ENCODE measurements at regions of chr11 and their contacts with region 1.

Region 1: GRCh38 chr11:75667831-75668450 is 897 bp downstream of the MAP6 start:
- DNase-seq: peak; percentile 36
- H3K4me3 Mint-ChIP-seq: peak overlapping the region; percentile 76
- H3K27ac Mint-ChIP-seq: no peak overlapping the region
- H3K4me1 Mint-ChIP-seq: peaks cover 18% of the 10 kb centered on the region
- H3K27me3 Mint-ChIP-seq: peaks cover 69% of the 10 kb centered on the region

Region 2: DNA sequence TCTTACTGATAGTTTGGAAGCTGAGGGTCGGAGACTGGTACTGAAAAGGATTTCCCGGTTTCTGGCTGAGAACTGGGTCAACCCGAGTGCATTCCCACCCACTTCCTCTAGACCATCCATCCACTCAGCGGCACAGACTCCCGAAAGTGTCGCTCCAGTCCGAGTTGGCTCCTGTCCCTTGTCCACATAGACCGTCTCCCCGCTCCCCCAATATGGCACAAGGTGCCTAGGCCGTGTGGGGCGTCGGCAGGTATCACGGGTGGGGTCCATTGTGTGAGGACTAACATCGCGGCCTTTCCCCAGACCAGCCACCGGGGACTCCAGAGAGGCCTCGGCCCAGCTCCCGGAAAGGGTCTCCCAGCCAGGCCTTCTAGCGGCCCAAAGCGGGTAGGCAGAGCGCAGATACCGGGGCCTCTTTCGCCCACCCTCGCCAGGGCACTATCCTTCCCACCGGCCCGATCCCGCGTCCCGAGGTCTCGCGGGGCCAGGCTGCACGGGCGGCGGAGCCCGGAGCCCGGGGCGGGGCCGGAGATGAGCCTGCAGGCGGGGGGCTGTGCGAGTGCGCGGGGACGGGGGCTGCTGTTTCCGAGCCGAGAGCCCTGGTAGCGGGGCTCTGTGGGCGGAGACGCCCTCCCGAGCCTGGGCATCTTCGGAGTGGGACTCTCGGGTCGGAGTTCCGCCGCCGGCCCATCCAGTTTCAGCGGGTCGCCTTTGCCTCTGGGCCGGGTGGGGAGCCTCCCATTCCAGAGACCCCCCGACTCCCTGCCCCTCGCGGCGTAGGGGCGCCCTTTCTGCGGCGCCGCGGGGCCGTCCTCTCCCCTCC is 84.8 kb before region 1 on chr11:
- CTCF ChIA-PET with region 1: no interaction called
- POLR2A ChIA-PET with region 1: no interaction called
- intact Hi-C with region 1: no loop called
- DNase-seq: peak; percentile 78
- H3K4me3 Mint-ChIP-seq: peak overlapping the region; percentile 78
- H3K27ac Mint-ChIP-seq: peak overlapping the region; percentile 76
- H3K4me1 Mint-ChIP-seq: peaks cover 16% of the 10 kb centered on the region
- H3K27me3 Mint-ChIP-seq: no peaks in the 10 kb centered on the region

Region 3: GRCh38 chr11:75654314-75654713 is 13.6 kb before region 1 on chr11:
- CTCF ChIA-PET with region 1: no interaction called
- POLR2A ChIA-PET with region 1: interaction called, 3 read pairs
- intact Hi-C with region 1: loop called (anchors 2 kb)
- DNase-seq: peak; percentile 43
- H3K4me3 Mint-ChIP-seq: no peak overlapping the region
- H3K27ac Mint-ChIP-seq: no peak overlapping the region
- H3K4me1 Mint-ChIP-seq: peaks cover 11% of the 10 kb centered on the region
- H3K27me3 Mint-ChIP-seq: peaks cover 14% of the 10 kb centered on the region

Region 4: GRCh38 chr11:75733431-75734107 is 65.6 kb after region 1 on chr11:
- CTCF ChIA-PET with region 1: no interaction called
- POLR2A ChIA-PET with region 1: no interaction called
- intact Hi-C with region 1: no loop called
- DNase-seq: peak; percentile 36
- H3K4me3 Mint-ChIP-seq: no peak overlapping the region
- H3K27ac Mint-ChIP-seq: no peak overlapping the region
- H3K4me1 Mint-ChIP-seq: peaks cover 3% of the 10 kb centered on the region
- H3K27me3 Mint-ChIP-seq: peaks cover 3% of the 10 kb centered on the region

Region 5: GRCh38 chr11:75850787-75851186 is 182.8 kb after region 1 on chr11:
- CTCF ChIA-PET with region 1: no interaction called
- POLR2A ChIA-PET with region 1: no interaction called
- intact Hi-C with region 1: no loop called
- DNase-seq: no peak
- H3K4me3 Mint-ChIP-seq: no peak overlapping the region
- H3K27ac Mint-ChIP-seq: no peak overlapping the region
- H3K4me1 Mint-ChIP-seq: peaks cover 13% of the 10 kb centered on the region
- H3K27me3 Mint-ChIP-seq: no peaks in the 10 kb centered on the region